ENCODE measurements at regions of chr18 and their contacts with region 1.

Region 1: GRCh38 chr18:25050605-25051004 is 301.4 kb downstream of the ZNF521 start:
- DNase-seq: no peak
- ATAC-seq: no peak
- H3K4me3 Mint-ChIP-seq: no peak overlapping the region
- H3K27ac Mint-ChIP-seq: no peak overlapping the region
- H3K4me1 Mint-ChIP-seq: peaks cover 12% of the 10 kb centered on the region
- H3K27me3 Mint-ChIP-seq: peaks cover under 1% of the 10 kb centered on the region; the same call in 1 of the 2 replicates
- CTCF ChIP-seq: no peak

Region 2: GRCh38 chr18:25033747-25034471 is 16.7 kb before region 1 on chr18:
- CTCF ChIA-PET with region 1: no interaction called
- POLR2A ChIA-PET with region 1: no interaction called
- DNase-seq: no peak
- ATAC-seq: no peak
- H3K4me3 Mint-ChIP-seq: no peak overlapping the region
- H3K27ac Mint-ChIP-seq: no peak overlapping the region
- H3K4me1 Mint-ChIP-seq: peaks cover 4% of the 10 kb centered on the region; the same call in 1 of the 2 replicates
- H3K27me3 Mint-ChIP-seq: peaks cover 17% of the 10 kb centered on the region
- CTCF ChIP-seq: no peak

Region 3: GRCh38 chr18:25062720-25063119 is 12.1 kb after region 1 on chr18:
- CTCF ChIA-PET with region 1: no interaction called
- POLR2A ChIA-PET with region 1: interaction called, 12 read pairs
- DNase-seq: no peak
- ATAC-seq: peak; percentile 32; the same call in 1 of the 2 replicates
- H3K4me3 Mint-ChIP-seq: no peak overlapping the region
- H3K27ac Mint-ChIP-seq: no peak overlapping the region
- H3K4me1 Mint-ChIP-seq: no peaks in the 10 kb centered on the region
- H3K27me3 Mint-ChIP-seq: no peaks in the 10 kb centered on the region
- CTCF ChIP-seq: no peak